Activated CD4-positive, alpha-beta T cell treated with anti-CD3 and anti-CD28 coated beads, Interleukin-2, amount 10 ng/mL, durations not matched to agents 24 days and 14 days (primary cell): ENCODE measurements at regions of chr17 and their contacts with region 1.

Region 1: DNA sequence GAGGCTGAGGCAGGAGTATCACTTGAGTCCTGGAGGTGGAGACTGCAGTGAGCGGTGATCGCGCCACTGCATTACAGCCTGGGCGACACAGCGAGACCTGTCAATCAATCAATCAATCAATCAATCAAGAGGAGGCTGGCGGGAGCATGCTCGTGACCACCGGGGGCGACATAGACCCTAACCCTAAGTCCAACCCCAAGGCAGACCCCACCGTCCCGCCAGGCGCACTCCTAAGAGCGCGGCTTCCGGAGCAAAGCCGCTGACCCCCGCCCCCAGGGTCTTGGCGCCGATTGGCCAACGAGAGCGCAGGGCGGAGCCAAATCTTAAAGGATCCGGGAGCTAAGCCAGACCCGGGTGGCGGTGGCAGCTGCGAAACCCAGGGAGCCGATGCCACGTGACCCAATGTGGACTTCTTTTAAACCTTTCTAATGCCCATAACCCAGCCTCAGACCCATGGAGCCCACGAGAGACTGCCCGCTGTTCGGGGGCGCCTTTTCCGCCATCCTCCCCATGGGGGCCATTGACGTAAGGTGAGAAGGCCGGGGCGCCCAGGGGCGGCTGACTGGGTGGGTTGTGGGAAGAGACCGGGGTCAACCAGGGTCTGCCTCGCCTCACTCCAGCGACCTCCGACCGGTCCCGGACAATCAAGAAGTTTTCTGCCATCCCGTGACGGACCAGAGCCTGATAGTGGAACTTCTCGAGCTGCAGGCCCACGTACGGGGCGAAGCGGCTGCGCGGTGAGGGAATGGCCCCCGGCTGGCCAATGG is at the start of gene RANGRF:
- DNase-seq: peak; percentile 97
- H3K4me3 Mint-ChIP-seq: peak within 1 kb of the TSS; percentile 99
- H3K27ac Mint-ChIP-seq: peak within 1 kb of the TSS; percentile 96
- H3K4me1 Mint-ChIP-seq: peaks cover 37% of the 10 kb centered on the region
- H3K27me3 Mint-ChIP-seq: no peaks in the 10 kb centered on the region
- total RNA-seq, gene RANGRF: 57.5 and 66.3 TPM in 2 replicates

Region 2: DNA sequence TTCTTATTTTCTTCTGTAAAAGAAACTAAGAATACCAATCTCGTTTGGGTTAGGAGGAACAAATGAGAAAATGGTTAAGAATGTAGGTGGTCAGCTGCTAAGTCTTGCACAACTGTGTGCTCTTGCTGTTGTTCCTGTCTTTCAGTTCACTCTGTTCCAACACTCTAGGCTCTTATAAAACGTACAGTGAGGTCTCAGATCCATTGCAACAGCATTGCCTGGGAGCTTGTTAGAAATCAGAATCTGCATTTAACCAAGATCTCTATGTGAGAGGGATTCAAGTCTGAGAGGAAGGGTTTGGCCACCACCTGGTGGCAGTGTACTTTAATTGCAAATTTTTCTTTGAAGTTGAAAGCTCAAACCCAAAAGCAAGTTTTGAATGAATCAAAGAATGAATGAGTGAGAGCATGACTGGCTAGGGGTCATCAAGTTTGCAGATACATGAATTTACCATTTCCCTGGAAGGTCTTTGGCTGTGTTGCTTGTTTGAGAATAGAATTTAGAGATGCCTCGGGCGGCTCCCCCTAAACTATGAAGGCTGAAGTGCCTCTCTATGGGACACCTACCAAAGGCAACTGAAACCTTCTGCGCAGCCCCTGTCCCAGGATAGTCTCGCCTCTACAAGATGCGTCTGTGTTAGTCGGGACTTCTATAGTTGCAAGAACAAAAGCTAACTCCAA is 247.1 kb before region 1 on chr17:
- intact Hi-C with region 1: no loop called
- DNase-seq: peak; percentile 81
- H3K4me3 Mint-ChIP-seq: no peak overlapping the region
- H3K27ac Mint-ChIP-seq: no peak overlapping the region
- H3K4me1 Mint-ChIP-seq: peaks cover 2% of the 10 kb centered on the region
- H3K27me3 Mint-ChIP-seq: peaks cover 26% of the 10 kb centered on the region

Region 3: DNA sequence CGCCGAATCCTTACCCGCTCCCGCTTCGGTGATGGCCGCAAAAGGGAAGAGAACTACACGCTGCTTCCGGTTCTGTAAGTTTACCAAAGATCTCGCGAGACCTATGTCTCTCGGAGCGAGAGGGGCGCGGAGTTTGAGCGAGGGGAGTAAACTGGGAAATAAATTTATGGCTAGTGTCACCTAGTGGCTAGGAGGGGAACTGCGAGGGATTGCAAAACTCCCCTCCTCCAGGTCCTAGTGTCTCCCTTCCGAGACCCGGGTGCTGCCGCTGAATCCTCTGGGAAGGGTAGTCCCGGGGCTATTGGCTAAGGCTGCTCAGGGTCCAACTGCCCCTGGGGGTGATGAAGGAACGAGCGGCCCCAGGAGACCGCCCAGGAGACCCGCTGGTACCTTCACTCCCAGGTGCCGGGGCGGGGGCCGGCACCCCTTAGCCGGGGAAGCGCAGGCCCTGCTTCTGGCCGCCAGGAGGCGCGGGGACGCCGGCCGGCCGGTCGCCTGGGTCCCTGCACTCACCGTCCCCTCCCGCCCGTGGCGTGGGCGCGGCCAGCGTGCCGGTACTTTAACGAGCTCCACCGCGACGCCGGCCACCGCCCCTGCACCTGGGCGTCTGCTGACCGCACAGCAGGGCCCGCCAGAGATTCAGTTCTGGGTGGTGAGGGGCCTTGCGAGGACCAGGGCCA is 94.8 kb after region 1 on chr17 and contains the start of gene RPL26:
- intact Hi-C with region 1: loop called (anchors 1 kb)
- DNase-seq: peak; percentile 98
- H3K4me3 Mint-ChIP-seq: peak within 1 kb of the TSS; percentile 99
- H3K27ac Mint-ChIP-seq: peak within 1 kb of the TSS; percentile 95
- H3K4me1 Mint-ChIP-seq: peaks cover 40% of the 10 kb centered on the region
- H3K27me3 Mint-ChIP-seq: no peaks in the 10 kb centered on the region
- total RNA-seq, gene RPL26: 2,460 and 2,469 TPM in 2 replicates

Region 4: DNA sequence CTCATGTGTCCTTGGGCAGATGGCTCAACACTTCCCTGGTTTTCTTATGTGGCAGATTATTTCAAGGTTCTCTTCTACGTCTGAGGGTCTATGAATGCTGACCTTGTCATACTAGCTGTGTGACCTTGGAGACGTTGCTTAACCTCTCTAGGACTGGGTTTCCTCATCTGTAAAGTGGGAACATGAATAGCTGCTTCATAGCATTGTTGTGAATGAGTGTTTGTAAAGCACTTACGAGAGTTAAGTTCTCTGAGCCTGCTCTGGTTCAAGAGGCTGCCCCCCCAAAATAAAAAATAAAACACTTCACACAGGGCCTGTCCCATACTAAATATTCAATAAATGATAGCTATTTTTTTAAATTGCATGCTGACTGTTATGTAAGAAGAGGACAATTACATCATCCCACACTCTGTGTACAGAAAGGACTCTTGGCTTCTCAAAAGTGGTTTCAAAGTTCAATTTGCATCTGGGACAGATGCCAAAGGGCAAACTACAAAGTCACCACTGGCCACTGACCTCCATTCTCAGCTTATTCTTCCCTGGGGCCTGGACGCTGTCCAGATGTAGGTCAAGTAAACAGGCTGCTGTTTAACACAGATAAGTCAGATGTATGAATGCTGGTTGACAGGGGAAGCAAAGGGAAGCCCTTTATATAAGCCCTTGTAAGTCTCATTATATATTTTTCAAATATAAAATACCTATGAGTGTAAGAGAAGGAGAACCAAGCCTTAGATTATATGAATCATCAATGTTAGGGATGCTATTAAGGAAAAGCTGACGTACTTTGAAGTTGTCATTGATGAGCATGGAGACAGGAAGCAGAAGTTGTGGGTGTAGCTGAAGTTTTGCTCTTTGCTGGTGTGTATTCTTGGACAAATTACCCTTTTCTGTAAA is 131.8 kb after region 1 on chr17:
- intact Hi-C with region 1: no loop called
- DNase-seq: no peak
- H3K4me3 Mint-ChIP-seq: no peak overlapping the region
- H3K27ac Mint-ChIP-seq: no peak overlapping the region
- H3K4me1 Mint-ChIP-seq: no peaks in the 10 kb centered on the region
- H3K27me3 Mint-ChIP-seq: peaks cover 54% of the 10 kb centered on the region